A673 (cell line): ENCODE measurements at regions of chr19 and their contacts with region 1.

Region 1: GRCh38 chr19:10946964-10947657 is 13.7 kb upstream of the SMARCA4 start:
- DNase-seq: peak; percentile 82
- H3K4me3 ChIP-seq: no peak overlapping the region
- H3K27ac ChIP-seq: peak overlapping the region; percentile 38
- H3K4me1 ChIP-seq: peaks cover 25% of the 10 kb centered on the region
- H3K27me3 ChIP-seq: no peaks in the 10 kb centered on the region
- CTCF ChIP-seq: no peak

Region 2: GRCh38 chr19:10928525-10929401 is 18.3 kb before region 1 on chr19 and contains the starts of genes TIMM29 and YIPF2:
- CTCF ChIA-PET with region 1: no interaction called
- POLR2A ChIA-PET with region 1: no interaction called
- intact Hi-C with region 1: no loop called
- DNase-seq: peak; percentile 99
- H3K4me3 ChIP-seq: peak within 1 kb of the TSS; percentile 93
- H3K27ac ChIP-seq: peak within 1 kb of the TSS; percentile 80
- H3K4me1 ChIP-seq: peaks cover 15% of the 10 kb centered on the region
- H3K27me3 ChIP-seq: no peaks in the 10 kb centered on the region
- CTCF ChIP-seq: no peak
- total RNA-seq, gene TIMM29: 30.0 and 32.5 TPM in 2 replicates
- total RNA-seq, gene YIPF2: 24.5 and 24.6 TPM in 2 replicates

Region 3: DNA sequence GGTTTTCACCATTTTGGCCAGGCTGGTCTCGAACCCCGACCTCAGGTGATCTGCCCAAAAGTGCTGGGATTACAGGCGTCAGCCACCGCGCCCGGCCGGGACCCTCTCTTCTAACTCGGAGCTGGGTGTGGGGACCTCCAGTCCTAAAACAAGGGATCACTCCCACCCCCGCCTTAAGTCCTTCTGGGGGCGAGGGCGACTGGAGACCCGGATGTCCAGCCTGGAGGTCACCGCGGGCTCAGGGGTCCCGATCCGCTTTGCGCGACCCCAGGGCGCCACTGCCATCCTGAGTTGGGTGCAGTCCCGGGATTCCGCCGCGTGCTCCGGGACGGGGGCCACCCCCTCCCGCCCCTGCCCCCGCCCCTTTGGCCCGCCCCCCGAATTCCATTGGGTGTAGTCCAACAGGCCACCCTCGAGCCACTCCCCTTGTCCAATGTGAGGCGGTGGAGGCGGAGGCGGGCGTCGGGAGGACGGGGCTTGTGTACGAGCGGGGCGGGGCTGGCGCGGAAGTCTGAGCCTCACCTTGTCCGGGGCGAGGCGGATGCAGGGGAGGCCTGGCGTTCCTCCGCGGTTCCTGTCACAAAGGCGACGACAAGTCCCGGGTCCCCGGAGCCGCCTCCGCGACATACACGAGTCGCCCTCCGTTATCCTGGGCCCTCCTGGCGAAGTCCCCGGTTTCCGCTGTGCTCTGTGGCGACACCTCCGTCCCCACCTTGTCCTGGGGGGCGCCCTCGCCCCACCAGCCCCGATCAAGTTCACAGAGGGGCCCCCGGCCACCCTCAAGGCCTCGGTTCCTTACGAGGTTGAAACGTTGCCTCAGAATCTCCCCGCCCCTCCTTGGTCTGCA is 143.2 kb after region 1 on chr19:
- CTCF ChIA-PET with region 1: no interaction called
- POLR2A ChIA-PET with region 1: interaction called, 7 read pairs
- intact Hi-C with region 1: loop called (anchors 10 kb)
- DNase-seq: peak; percentile 99
- H3K4me3 ChIP-seq: peak overlapping the region; percentile 90
- H3K27ac ChIP-seq: peak overlapping the region; percentile 100
- H3K4me1 ChIP-seq: peaks cover 38% of the 10 kb centered on the region
- H3K27me3 ChIP-seq: no peaks in the 10 kb centered on the region
- CTCF ChIP-seq: no peak